Common myeloid progenitor, CD34-positive (primary cell): ENCODE measurements at regions of chr20 and their contacts with region 1.

Region 1: DNA sequence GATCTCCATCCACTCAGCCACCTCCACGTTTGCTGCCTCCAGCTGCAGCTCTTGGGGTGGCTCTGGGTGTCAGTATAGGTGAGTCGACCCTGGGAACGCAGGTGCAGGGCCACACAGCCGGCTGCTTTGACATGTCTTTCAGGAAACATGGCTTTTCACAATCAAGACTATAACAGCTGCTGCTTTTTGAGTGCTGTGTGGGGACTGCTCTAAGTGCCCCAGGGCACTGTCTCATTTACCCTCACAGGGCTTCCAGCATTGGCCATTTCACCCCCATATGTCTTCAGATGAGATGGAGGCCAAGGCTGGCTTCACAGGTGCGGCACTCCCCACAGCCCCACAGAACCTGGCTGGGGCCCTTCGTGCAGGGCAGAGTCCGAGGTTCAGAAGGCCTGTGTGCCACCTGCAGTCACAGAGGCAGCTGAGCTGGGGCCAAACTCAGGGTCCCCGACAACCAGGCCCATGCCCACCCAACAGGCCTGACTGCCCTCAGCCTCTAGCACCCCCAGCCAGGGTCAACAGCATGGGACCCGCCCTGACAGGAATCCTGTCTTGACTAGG is 14.9 kb upstream of the CST7 start:
- DNase-seq: no peak
- H3K4me3 ChIP-seq: no peak overlapping the region
- H3K27ac ChIP-seq: no peak overlapping the region
- H3K4me1 ChIP-seq: peaks cover 0 to 40% (median 31%) of the 10 kb centered on the region in 4 experiments
- H3K27me3 ChIP-seq: no peaks in the 10 kb centered on the region

Region 2: DNA sequence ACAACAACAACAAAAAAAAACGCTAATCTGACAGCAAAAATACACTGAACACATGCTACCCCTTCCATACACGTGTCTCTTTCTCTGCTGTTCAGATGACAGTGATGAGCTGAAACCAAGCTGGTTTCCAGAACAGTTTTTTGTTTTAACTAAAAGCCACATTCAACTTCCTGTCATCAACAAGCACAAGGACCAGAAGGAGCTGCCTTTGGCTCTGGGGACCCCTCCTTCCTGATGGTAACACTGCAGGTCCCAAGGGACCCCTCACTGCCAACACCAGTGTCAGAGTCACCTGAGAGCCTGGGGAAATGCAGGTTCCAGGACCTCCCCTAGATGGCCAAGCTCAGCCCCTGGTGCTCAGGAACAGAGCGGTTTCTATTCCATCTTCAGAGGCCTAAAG is 20.9 kb after region 1 on chr20:
- CTCF ChIA-PET with region 1: interaction called, 20 read pairs
- POLR2A ChIA-PET with region 1: interaction called, 3 read pairs
- DNase-seq: peak in 2 of 3 donors; percentile 24 to 31
- H3K4me3 ChIP-seq: no peak overlapping the region
- H3K27ac ChIP-seq: no peak overlapping the region
- H3K4me1 ChIP-seq: peaks cover 0 to 39% (median 23%) of the 10 kb centered on the region in 4 experiments
- H3K27me3 ChIP-seq: no peaks in the 10 kb centered on the region

Region 3: DNA sequence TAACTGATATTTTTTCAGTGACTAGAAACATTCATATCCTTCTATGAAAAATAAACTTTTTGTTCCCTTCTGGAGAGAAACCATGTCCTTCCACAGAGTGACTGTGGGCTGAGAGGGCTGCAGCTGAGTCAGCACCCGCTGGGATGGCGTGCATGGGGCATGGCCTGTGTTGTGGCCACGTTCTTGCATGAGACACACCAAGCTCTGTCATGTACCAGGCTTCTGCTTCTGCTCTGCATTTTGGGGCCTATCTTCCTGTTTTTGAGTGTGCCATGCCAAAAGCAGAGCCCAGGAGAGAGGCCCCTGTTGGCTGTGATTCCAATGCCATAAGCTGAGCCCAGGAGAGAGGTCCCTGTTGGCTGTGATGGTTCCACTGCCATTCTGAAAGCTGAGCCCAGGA is 47.6 kb after region 1 on chr20:
- CTCF ChIA-PET with region 1: interaction called, 10 read pairs
- POLR2A ChIA-PET with region 1: no interaction called
- DNase-seq: peak in 2 of 3 donors; percentile 45 to 56
- H3K4me3 ChIP-seq: no peak overlapping the region
- H3K27ac ChIP-seq: no peak overlapping the region
- H3K4me1 ChIP-seq: peaks cover 0 to 52% (median 39%) of the 10 kb centered on the region in 4 experiments
- H3K27me3 ChIP-seq: no peaks in the 10 kb centered on the region

Region 4: GRCh38 chr20:25065625-25066338 is 131.6 kb after region 1 on chr20:
- CTCF ChIA-PET with region 1: interaction called, 20 read pairs
- POLR2A ChIA-PET with region 1: no interaction called
- DNase-seq: peak; percentile 73 to 85 (median 80)
- H3K4me3 ChIP-seq: no peak overlapping the region
- H3K27ac ChIP-seq: no peak overlapping the region
- H3K4me1 ChIP-seq: no peaks in the 10 kb centered on the region
- H3K27me3 ChIP-seq: peaks cover 0 to 18% (median 10%) of the 10 kb centered on the region in 5 experiments